Dorsolateral prefrontal cortex (tissue), 120 donors: ENCODE measurements at regions of chr1 and their contacts with region 1.

Region 1: GRCh38 chr1:235971571-235972310 is 93.1 kb downstream of the NID1 start:
- DNase-seq: peak; percentile 63 to 90 (median 82)
- H3K4me3 ChIP-seq: peak overlapping the region; percentile 22 to 71 (median 57)
- H3K27ac ChIP-seq: peak overlapping the region in 57 of 59 donors; percentile 8 to 94 (median 79)
- H3K27me3 ChIP-seq: no peaks in the 10 kb centered on the region
- CTCF ChIP-seq: peak; percentile 60 to 90 (median 79)

Region 2: DNA sequence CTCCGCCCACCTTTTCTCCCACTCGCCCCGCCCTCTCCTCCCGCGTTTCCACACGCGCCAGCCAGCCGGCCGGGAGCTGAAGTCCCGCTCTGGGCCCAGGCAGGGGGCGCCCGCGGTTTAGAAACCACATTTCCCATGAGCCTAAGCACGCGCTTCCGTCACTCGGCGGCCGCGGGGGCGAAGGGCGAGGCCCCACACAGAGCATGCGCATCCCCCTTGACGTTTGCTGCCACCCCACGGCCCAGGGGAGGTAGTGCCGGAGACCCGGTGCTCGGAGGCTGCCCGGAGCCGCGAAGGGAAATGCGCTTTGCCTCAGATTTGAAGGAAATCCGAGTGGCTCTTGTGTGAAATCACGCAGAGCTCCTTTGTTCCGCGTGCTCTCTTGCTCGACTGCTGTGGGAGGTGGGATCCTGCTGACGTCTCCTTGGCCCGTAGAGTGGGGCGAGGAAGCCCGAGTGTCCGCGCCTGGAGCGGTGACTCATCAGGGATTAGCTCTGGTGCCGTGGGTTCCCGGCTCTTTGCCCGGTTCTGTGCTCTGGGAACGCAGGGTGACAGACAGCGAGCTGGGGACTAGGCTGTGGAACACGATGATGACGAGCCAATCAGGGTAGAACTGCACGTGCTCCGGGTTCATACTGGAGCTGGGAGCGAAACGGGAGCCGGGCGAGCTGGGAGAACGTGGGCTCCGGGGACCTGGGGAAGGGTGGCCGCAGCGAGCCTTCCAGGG is 467.1 kb before region 1 on chr1:
- intact Hi-C with region 1: loop called in 1 of 2 experiments (anchors 10 kb)
- DNase-seq: peak; percentile 98 to 99 (median 99)
- H3K4me3 ChIP-seq: peak overlapping the region; percentile 67 to 95 (median 85)
- H3K27ac ChIP-seq: peak overlapping the region; percentile 72 to 100 (median 97)
- H3K27me3 ChIP-seq: no peaks in the 10 kb centered on the region
- CTCF ChIP-seq: peak; percentile 61 to 99 (median 94)

Region 3: GRCh38 chr1:235513495-235514366 is 458.0 kb before region 1 on chr1:
- intact Hi-C with region 1: loop called (anchors 5 to 10 kb)
- DNase-seq: peak in 1 of 10 donors; percentile 38
- H3K4me3 ChIP-seq: no peak overlapping the region
- H3K27ac ChIP-seq: no peak overlapping the region
- H3K27me3 ChIP-seq: no peaks in the 10 kb centered on the region
- CTCF ChIP-seq: peak; percentile 86 to 100 (median 94)

Region 4: GRCh38 chr1:235866913-235867845 is 104.6 kb before region 1 on chr1:
- intact Hi-C with region 1: loop called in 1 of 2 experiments (anchors 5 kb)
- DNase-seq: peak; percentile 93 to 99 (median 96)
- H3K4me3 ChIP-seq: peak overlapping the region; percentile 56 to 100 (median 97)
- H3K27ac ChIP-seq: peak overlapping the region; percentile 49 to 98 (median 92)
- H3K27me3 ChIP-seq: no peaks in the 10 kb centered on the region
- CTCF ChIP-seq: peak in 4 of 56 donors; percentile 13 to 24 (median 17)